Mammary epithelial cell (primary cell): ENCODE measurements at regions of chr20 and their contacts with region 1.

Region 1: GRCh38 chr20:40945754-40946450 is 82.7 kb upstream of the TOP1 start:
- DNase-seq: no peak
- H3K4me3 ChIP-seq: no peak overlapping the region
- H3K27ac ChIP-seq: no peak overlapping the region
- H3K4me1 ChIP-seq: no peaks in the 10 kb centered on the region
- H3K27me3 ChIP-seq: peaks cover 2% of the 10 kb centered on the region
- CTCF ChIP-seq: peak; percentile 71 to 76

Region 2: DNA sequence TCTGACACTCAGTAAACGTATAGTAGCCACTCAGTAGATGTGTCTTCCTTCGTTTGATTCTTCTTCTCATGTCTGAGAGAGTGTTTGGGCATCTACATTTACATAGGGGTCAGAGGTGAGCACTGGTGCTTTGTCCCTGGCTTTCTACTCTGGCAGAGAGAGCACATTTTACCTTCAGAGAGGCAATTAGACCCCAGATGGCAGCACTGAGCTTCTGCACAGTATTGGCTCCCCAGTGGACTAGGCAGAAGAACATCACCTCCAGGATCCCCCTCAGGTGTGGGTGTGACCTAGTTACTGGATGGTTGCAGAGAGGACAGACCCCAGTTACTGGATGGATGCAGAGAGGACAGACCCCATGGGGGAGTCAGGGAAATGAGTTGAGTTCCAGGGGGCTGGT is 1656.6 kb before region 1 on chr20:
- CTCF ChIA-PET with region 1: no interaction called
- dilution Hi-C with region 1: no loop called
- in situ Hi-C with region 1: loop called in 1 of 2 experiments (anchors 25 kb)
- intact Hi-C with region 1: no loop called
- DNase-seq: no peak
- H3K4me3 ChIP-seq: no peak overlapping the region
- H3K27ac ChIP-seq: no peak overlapping the region
- H3K4me1 ChIP-seq: no peaks in the 10 kb centered on the region
- H3K27me3 ChIP-seq: no peaks in the 10 kb centered on the region
- CTCF ChIP-seq: peak; percentile 15 to 33

Region 3: GRCh38 chr20:40741507-40742106 is 204.3 kb before region 1 on chr20:
- CTCF ChIA-PET with region 1: interaction called, 3 read pairs
- dilution Hi-C with region 1: no loop called
- in situ Hi-C with region 1: loop called in 1 of 2 experiments (anchors 10 kb)
- intact Hi-C with region 1: loop called (anchors 1 kb)
- DNase-seq: peak; percentile 37
- H3K4me3 ChIP-seq: no peak overlapping the region
- H3K27ac ChIP-seq: no peak overlapping the region
- H3K4me1 ChIP-seq: no peaks in the 10 kb centered on the region
- H3K27me3 ChIP-seq: peaks cover 1% of the 10 kb centered on the region
- CTCF ChIP-seq: peak; percentile 80 to 92

Region 4: GRCh38 chr20:40797425-40797824 is 148.5 kb before region 1 on chr20:
- CTCF ChIA-PET with region 1: interaction called, 3 read pairs
- dilution Hi-C with region 1: no loop called
- in situ Hi-C with region 1: no loop called
- intact Hi-C with region 1: loop called (anchors 1 kb)
- DNase-seq: peak; percentile 12
- H3K4me3 ChIP-seq: no peak overlapping the region
- H3K27ac ChIP-seq: no peak overlapping the region
- H3K4me1 ChIP-seq: no peaks in the 10 kb centered on the region
- H3K27me3 ChIP-seq: peaks cover 5% of the 10 kb centered on the region
- CTCF ChIP-seq: peak; percentile 44 to 54

Region 5: GRCh38 chr20:41205313-41205712 is 259.4 kb after region 1 on chr20:
- CTCF ChIA-PET with region 1: no interaction called
- dilution Hi-C with region 1: no loop called
- in situ Hi-C with region 1: no loop called
- intact Hi-C with region 1: no loop called
- DNase-seq: no peak
- H3K4me3 ChIP-seq: no peak overlapping the region
- H3K27ac ChIP-seq: no peak overlapping the region
- H3K4me1 ChIP-seq: no peaks in the 10 kb centered on the region
- H3K27me3 ChIP-seq: no peaks in the 10 kb centered on the region
- CTCF ChIP-seq: no peak